ENCODE measurements at regions of chr7 and their contacts with region 1.

Region 1: GRCh38 chr7:69276011-69276729 is 322.1 kb upstream of the AUTS2 start:
- DNase-seq: no peak
- ATAC-seq: no peak
- H3K4me3 ChIP-seq: no peak overlapping the region
- H3K27ac ChIP-seq: no peak overlapping the region
- H3K4me1 ChIP-seq: no peaks in the 10 kb centered on the region
- H3K27me3 ChIP-seq: no peaks in the 10 kb centered on the region
- CTCF ChIP-seq: no peak

Region 2: GRCh38 chr7:67644151-67644550 is 1632.0 kb before region 1 on chr7:
- CTCF ChIA-PET with region 1: interaction called, 11 read pairs
- POLR2A ChIA-PET with region 1: no interaction called
- in situ Hi-C with region 1: no loop called
- intact Hi-C with region 1: no loop called
- DNase-seq: no peak
- ATAC-seq: no peak
- H3K4me3 ChIP-seq: no peak overlapping the region
- H3K27ac ChIP-seq: no peak overlapping the region
- H3K4me1 ChIP-seq: no peaks in the 10 kb centered on the region
- H3K27me3 ChIP-seq: no peaks in the 10 kb centered on the region
- CTCF ChIP-seq: no peak

Region 3: GRCh38 chr7:69373171-69374043 is 97.2 kb after region 1 on chr7:
- CTCF ChIA-PET with region 1: no interaction called
- POLR2A ChIA-PET with region 1: no interaction called
- in situ Hi-C with region 1: no loop called
- intact Hi-C with region 1: no loop called
- DNase-seq: no peak
- ATAC-seq: no peak
- H3K4me3 ChIP-seq: no peak overlapping the region
- H3K27ac ChIP-seq: no peak overlapping the region
- H3K4me1 ChIP-seq: no peaks in the 10 kb centered on the region
- H3K27me3 ChIP-seq: no peaks in the 10 kb centered on the region
- CTCF ChIP-seq: no peak

Measured in Panc1 (cell line).